Activated CD4-positive, alpha-beta T cell treated with anti-CD3 and anti-CD28 coated beads for 36 hours (primary cell): ENCODE measurements at regions of chr2 and their contacts with region 1.

Region 1: GRCh38 chr2:121319953-121320352 is 35.0 kb upstream of the TFCP2L1 start:
- DNase-seq: no peak
- ATAC-seq: no peak
- H3K4me3 Mint-ChIP-seq: no peak overlapping the region
- H3K27ac Mint-ChIP-seq: no peak overlapping the region
- H3K4me1 Mint-ChIP-seq: no peaks in the 10 kb centered on the region
- H3K27me3 Mint-ChIP-seq: no peaks in the 10 kb centered on the region

Region 2: DNA sequence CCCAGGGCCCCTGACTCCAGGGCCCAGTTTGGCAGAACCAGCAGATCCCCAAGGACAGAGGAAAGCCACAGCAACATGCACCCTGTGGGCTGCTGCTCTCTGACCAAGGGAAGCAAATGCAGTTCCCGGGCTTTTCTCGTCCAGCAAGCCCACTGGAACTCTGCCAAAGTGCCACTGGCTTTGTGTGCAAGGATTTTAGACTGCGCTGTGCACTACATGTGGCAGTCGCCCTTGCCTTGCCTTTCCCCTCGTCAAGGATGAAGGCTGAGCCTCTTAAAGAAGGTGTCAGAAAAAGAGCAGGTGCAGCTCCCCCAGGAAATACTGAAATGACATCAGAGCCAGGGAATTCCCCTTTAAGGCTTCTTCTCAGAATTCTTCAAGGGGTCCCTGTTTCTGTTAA is 234.2 kb before region 1 on chr2:
- CTCF ChIA-PET with region 1: interaction called, 4 read pairs
- POLR2A ChIA-PET with region 1: no interaction called
- intact Hi-C with region 1: loop called (anchors 2 to 10 kb)
- DNase-seq: no peak
- ATAC-seq: no peak
- H3K4me3 Mint-ChIP-seq: no peak overlapping the region
- H3K27ac Mint-ChIP-seq: no peak overlapping the region
- H3K4me1 Mint-ChIP-seq: no peaks in the 10 kb centered on the region
- H3K27me3 Mint-ChIP-seq: peaks cover 8% of the 10 kb centered on the region

Region 3: DNA sequence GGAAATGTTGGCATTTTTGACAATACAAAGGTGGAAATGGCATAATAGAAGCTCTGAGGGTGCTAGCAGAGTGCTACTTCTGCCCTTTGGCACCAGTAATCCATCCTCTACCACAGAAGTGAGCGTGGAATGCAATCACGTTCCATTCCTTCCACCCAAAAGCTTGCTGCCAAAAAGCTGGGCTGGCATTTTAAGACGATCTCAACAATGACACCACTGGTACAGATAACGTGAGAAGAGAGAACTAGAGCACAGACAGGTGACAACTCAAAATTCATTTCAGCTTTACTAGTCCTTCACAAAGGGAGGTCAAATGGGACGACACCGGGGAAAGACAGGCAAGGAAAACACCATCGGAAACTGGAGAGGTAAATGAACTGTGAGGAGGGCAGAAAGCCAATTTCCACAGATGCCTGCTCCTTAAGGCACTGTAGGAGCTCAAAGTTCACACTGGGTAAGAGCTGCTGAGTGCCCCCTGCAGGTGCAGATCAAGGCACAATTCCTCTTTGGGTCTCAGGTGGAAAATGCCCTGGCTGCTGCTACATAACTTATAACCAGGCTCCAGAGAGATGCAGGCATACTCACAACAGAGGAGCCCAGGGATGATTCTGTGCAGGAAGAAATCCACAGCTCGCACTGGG is 160.0 kb after region 1 on chr2:
- CTCF ChIA-PET with region 1: no interaction called
- POLR2A ChIA-PET with region 1: no interaction called
- intact Hi-C with region 1: no loop called
- DNase-seq: no peak
- ATAC-seq: no peak
- H3K4me3 Mint-ChIP-seq: no peak overlapping the region
- H3K27ac Mint-ChIP-seq: peak overlapping the region; percentile 11
- H3K4me1 Mint-ChIP-seq: peaks cover 28% of the 10 kb centered on the region
- H3K27me3 Mint-ChIP-seq: no peaks in the 10 kb centered on the region

Region 4: GRCh38 chr2:121565389-121566250 is 245.7 kb after region 1 on chr2:
- CTCF ChIA-PET with region 1: no interaction called
- POLR2A ChIA-PET with region 1: no interaction called
- intact Hi-C with region 1: no loop called
- DNase-seq: no peak
- ATAC-seq: no peak
- H3K4me3 Mint-ChIP-seq: no peak overlapping the region
- H3K27ac Mint-ChIP-seq: no peak overlapping the region
- H3K4me1 Mint-ChIP-seq: peaks cover 69% of the 10 kb centered on the region
- H3K27me3 Mint-ChIP-seq: no peaks in the 10 kb centered on the region